Heart right ventricle (tissue), 16 donors: ENCODE measurements at regions of chr5 and their contacts with region 1.

Region 1: DNA sequence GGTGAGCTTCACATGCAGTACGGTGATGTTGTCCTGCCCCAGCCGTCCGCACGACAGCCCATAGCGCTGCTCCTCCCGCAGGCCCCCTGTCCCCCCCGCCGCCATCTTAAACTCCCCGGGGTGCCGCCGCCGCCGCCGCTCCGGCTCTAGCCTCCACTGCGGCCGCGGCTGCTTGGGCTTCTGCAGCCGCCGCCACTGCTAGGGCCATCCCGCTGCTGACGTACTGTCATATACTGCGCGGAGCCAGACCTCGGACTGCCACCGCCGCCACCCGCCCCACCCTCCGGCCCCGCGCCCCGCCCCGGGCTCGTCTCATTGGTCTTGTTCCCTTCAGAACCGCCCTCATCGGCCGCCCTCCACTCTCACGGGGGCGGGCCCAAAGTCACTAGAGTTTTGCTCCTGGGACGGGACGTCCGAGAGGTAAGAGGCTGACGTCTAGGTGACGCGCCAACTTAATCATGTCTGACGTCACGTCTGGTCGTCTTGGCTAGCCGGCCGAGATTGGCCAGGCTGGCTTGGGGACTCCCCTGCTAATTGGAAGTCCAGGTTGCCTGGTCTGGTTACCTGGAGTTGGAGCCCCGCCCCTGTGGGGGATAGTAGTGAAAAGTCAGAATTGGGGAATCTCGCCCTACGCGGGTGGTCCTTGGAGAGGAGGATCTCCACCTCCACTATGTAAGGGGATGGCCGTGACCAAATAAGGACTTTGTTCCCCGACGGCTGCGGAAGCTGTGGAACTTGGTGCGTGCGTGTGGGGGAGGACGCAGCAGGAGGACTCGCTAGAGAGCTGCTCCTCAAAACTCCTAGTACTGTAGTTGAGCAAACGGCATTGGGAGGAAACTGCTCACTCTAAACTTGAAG is at the start of gene ELL2:
- DNase-seq: peak; percentile 97
- ATAC-seq: peak; percentile 90 to 96 (median 94)
- H3K4me3 ChIP-seq: peak within 1 kb of the TSS; percentile 71 to 96 (median 88)
- H3K27ac ChIP-seq: peak within 1 kb of the TSS; percentile 90 to 100 (median 98)
- H3K4me1 ChIP-seq: peaks cover 0 to 43% (median 32%) of the 10 kb centered on the region in 9 donors
- H3K27me3 ChIP-seq: no peaks in the 10 kb centered on the region
- CTCF ChIP-seq: no peak
- total RNA-seq, gene ELL2: 19.2 to 68.2 (median 27.2) TPM

Region 2: DNA sequence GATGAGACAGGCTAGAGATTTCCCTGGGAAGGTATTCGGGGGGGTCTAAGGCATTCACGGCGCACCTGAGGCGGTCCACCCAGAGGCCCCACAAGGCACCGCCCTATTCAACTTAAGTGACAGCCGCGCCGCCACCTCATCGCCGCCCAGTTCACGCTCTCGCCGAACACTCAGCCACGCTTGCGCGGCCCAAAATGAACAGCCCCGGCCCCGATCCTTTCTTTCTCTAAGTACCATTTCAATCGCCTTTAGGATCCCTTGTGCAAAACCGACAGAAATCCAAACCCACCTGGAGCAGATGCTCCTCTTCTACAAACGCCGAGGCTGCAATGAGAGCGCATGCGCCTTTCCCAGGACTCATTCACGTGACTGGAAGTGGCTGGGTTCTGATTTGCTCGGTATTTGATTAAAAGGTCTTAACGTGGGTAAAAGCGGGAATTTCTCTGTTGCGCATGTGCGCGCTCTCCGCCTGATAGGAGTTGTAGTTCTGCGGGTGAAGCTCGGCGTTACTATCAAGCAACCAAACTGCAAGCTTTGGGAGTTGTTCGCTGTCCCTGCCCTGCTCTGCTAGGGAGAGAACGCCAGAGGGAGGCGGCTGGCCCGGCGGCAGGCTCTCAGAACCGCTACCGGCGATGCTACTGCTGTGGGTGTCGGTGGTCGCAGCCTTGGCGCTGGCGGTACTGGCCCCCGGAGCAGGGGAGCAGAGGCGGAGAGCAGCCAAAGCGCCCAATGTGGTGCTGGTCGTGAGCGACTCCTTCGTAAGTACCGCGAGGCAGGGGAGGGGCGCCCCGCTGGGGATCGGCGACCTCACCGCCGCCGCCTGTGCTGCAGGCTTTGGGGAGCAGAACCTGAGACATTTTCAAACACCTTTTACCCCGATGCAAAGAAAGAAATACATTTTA is 406.9 kb before region 1 on chr5 and contains the starts of genes ARSK and SKIC3:
- intact Hi-C with region 1: loop called in 1 of 10 experiments (anchors 10 kb)
- DNase-seq: peak; percentile 91 to 96
- ATAC-seq: peak; percentile 97 to 99 (median 98)
- H3K4me3 ChIP-seq: peak within 1 kb of the TSS; percentile 58 to 96 (median 74)
- H3K27ac ChIP-seq: peak within 1 kb of the TSS; percentile 43 to 91 (median 84)
- H3K4me1 ChIP-seq: peaks cover 0 to 45% (median 31%) of the 10 kb centered on the region in 9 donors
- H3K27me3 ChIP-seq: no peaks in the 10 kb centered on the region
- CTCF ChIP-seq: peak in 7 of 9 donors; percentile 16 to 61 (median 47)
- total RNA-seq, gene ARSK: 2.6 to 6.3 (median 3.8) TPM
- total RNA-seq, gene SKIC3: 53.5 to 74.9 (median 68.6) TPM

Region 3: GRCh38 chr5:95773335-95774059 is 188.3 kb before region 1 on chr5:
- intact Hi-C with region 1: loop called in 1 of 10 experiments (anchors 5 kb)
- DNase-seq: no peak
- ATAC-seq: peak in 4 of 8 donors; percentile 10 to 49 (median 33)
- H3K4me3 ChIP-seq: no peak overlapping the region
- H3K27ac ChIP-seq: peak overlapping the region in 1 of 10 donors; percentile 62
- H3K4me1 ChIP-seq: peaks cover 0 to 33% (median 23%) of the 10 kb centered on the region in 9 donors
- H3K27me3 ChIP-seq: no peaks in the 10 kb centered on the region
- CTCF ChIP-seq: no peak

Region 4: GRCh38 chr5:95846554-95847260 is 115.1 kb before region 1 on chr5:
- intact Hi-C with region 1: no loop called
- DNase-seq: peak in 1 of 2 donors; percentile 71
- ATAC-seq: peak; percentile 56 to 84 (median 72)
- H3K4me3 ChIP-seq: no peak overlapping the region
- H3K27ac ChIP-seq: no peak overlapping the region
- H3K4me1 ChIP-seq: peaks cover 0 to 41% (median 12%) of the 10 kb centered on the region in 9 donors
- H3K27me3 ChIP-seq: no peaks in the 10 kb centered on the region
- CTCF ChIP-seq: peak; percentile 92 to 98 (median 96)

Region 5: GRCh38 chr5:96226941-96227552 is 265.2 kb after region 1 on chr5:
- intact Hi-C with region 1: loop called in 2 of 10 experiments (anchors 10 kb)
- DNase-seq: no peak
- ATAC-seq: peak in 7 of 8 donors; percentile 41 to 87 (median 69)
- H3K4me3 ChIP-seq: no peak overlapping the region
- H3K27ac ChIP-seq: peak overlapping the region in 2 of 10 donors; percentile 37 to 57
- H3K4me1 ChIP-seq: peaks cover 0 to 12% (median 4%) of the 10 kb centered on the region in 9 donors
- H3K27me3 ChIP-seq: no peaks in the 10 kb centered on the region
- CTCF ChIP-seq: no peak

Region 6: GRCh38 chr5:96247097-96247701 is 285.4 kb after region 1 on chr5:
- intact Hi-C with region 1: loop called in 4 of 10 experiments (anchors 5 to 10 kb)
- DNase-seq: peak in 1 of 2 donors; percentile 52
- ATAC-seq: peak; percentile 67 to 97 (median 92)
- H3K4me3 ChIP-seq: peak overlapping the region in 3 of 10 donors; percentile 2 to 10 (median 5)
- H3K27ac ChIP-seq: peak overlapping the region; percentile 54 to 86 (median 74)
- H3K4me1 ChIP-seq: peaks cover 0 to 48% (median 17%) of the 10 kb centered on the region in 9 donors
- H3K27me3 ChIP-seq: no peaks in the 10 kb centered on the region
- CTCF ChIP-seq: no peak

Region 7: GRCh38 chr5:96331210-96331609 is 369.4 kb after region 1 on chr5:
- intact Hi-C with region 1: loop called in 9 of 10 experiments (anchors 1 to 10 kb)
- DNase-seq: no peak
- ATAC-seq: no peak
- H3K4me3 ChIP-seq: no peak overlapping the region
- H3K27ac ChIP-seq: peak overlapping the region in 1 of 10 donors; percentile 26
- H3K4me1 ChIP-seq: peaks cover 0 to 20% (median 4%) of the 10 kb centered on the region in 9 donors
- H3K27me3 ChIP-seq: no peaks in the 10 kb centered on the region
- CTCF ChIP-seq: no peak